Heart right ventricle (tissue), 16 donors: ENCODE measurements at regions of chr4 and their contacts with region 1.

Region 1: GRCh38 chr4:75950213-75950815 is 9.5 kb upstream of the NAAA start:
- DNase-seq: no peak
- ATAC-seq: no peak
- H3K4me3 ChIP-seq: no peak overlapping the region
- H3K27ac ChIP-seq: no peak overlapping the region
- H3K4me1 ChIP-seq: peaks cover 0 to 9% (median 0%) of the 10 kb centered on the region in 9 donors
- H3K27me3 ChIP-seq: no peaks in the 10 kb centered on the region
- CTCF ChIP-seq: no peak

Region 2: GRCh38 chr4:75817901-75818300 is 132.4 kb before region 1 on chr4:
- intact Hi-C with region 1: loop called in 1 of 10 experiments (anchors 10 kb)
- DNase-seq: no peak
- ATAC-seq: no peak
- H3K4me3 ChIP-seq: no peak overlapping the region
- H3K27ac ChIP-seq: no peak overlapping the region
- H3K4me1 ChIP-seq: peaks cover 0 to 7% (median 0%) of the 10 kb centered on the region in 9 donors
- H3K27me3 ChIP-seq: no peaks in the 10 kb centered on the region
- CTCF ChIP-seq: no peak